CD4-positive, alpha-beta T cell (primary cell): ENCODE measurements at regions of chr11 and their contacts with region 1.

Region 1: DNA sequence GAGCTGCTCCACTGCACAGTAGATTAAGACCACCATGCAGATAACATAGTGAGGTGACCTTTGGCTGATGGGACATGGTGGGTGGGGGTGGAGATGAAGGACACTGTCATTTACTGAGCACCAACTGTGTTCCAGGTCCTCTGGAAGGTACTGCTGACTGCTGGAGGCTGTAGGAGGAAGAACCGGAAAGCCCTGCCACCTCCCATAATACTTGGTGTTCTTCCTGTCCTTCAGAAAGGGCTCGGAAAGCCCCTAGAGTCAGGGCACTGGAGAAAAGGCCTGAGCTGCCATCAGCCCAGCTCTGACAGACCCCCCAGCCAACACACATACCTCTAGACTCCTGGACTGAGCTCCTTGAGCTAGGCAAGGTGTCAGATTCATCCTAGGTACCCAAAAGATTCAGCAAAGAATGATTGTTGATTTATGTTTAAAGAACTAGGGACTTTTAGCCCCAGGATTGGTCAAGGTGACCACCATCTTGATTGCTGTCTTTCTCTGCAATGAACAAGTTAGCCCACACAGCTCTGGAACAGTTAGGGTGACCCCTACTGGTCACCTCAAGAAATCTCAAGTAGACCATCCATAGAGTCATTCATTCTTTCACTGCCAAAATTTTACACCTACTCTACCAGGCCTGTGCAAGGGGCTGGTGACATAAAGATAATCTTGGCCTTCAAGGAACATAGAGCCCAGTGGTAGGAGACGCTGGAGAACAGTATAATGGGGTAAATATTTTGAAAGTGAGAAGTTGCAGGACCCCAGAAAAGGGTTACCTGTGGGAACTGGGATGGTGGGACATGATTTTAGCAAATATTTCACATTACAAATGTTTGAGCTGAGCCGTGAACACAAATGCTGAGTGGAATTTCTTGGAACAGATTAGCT is 39.4 kb downstream of the IRAG1 start:
- DNase-seq: peak in 9 of 14 experiments; percentile 10 to 77 (median 23)
- ATAC-seq: peak; percentile 64
- H3K4me3 ChIP-seq: no peak overlapping the region
- H3K4me3 Mint-ChIP-seq: no peak overlapping the region
- H3K27ac ChIP-seq: no peak overlapping the region
- H3K27ac Mint-ChIP-seq: no peak overlapping the region
- H3K4me1 ChIP-seq: peaks cover 4% of the 10 kb centered on the region
- H3K4me1 Mint-ChIP-seq: no peaks in the 10 kb centered on the region
- H3K27me3 ChIP-seq: no peaks in the 10 kb centered on the region
- H3K27me3 Mint-ChIP-seq: no peaks in the 10 kb centered on the region
- CTCF ChIP-seq: peak; percentile 89

Region 2: GRCh38 chr11:9210922-9211320 is 1443.2 kb before region 1 on chr11:
- CTCF ChIA-PET with region 1: no interaction called
- POLR2A ChIA-PET with region 1: no interaction called
- intact Hi-C with region 1: no loop called
- DNase-seq: peak in 2 of 14 experiments; percentile 28 to 33
- ATAC-seq: no peak
- H3K4me3 ChIP-seq: no peak overlapping the region
- H3K4me3 Mint-ChIP-seq: no peak overlapping the region
- H3K27ac ChIP-seq: no peak overlapping the region
- H3K27ac Mint-ChIP-seq: no peak overlapping the region
- H3K4me1 ChIP-seq: peaks cover 13% of the 10 kb centered on the region
- H3K4me1 Mint-ChIP-seq: peaks cover 74% of the 10 kb centered on the region
- H3K27me3 ChIP-seq: no peaks in the 10 kb centered on the region
- H3K27me3 Mint-ChIP-seq: no peaks in the 10 kb centered on the region
- CTCF ChIP-seq: no peak

Region 3: GRCh38 chr11:10405855-10406592 is 248.1 kb before region 1 on chr11:
- CTCF ChIA-PET with region 1: interaction called, 16 read pairs
- POLR2A ChIA-PET with region 1: interaction called, 3 read pairs
- intact Hi-C with region 1: loop called in 1 of 2 experiments (anchors 1 kb)
- DNase-seq: peak in 13 of 14 experiments; percentile 10 to 80 (median 24)
- ATAC-seq: peak; percentile 88
- H3K4me3 ChIP-seq: no peak overlapping the region
- H3K4me3 Mint-ChIP-seq: no peak overlapping the region
- H3K27ac ChIP-seq: no peak overlapping the region
- H3K27ac Mint-ChIP-seq: no peak overlapping the region
- H3K4me1 ChIP-seq: peaks cover 18% of the 10 kb centered on the region
- H3K4me1 Mint-ChIP-seq: peaks cover 34% of the 10 kb centered on the region
- H3K27me3 ChIP-seq: no peaks in the 10 kb centered on the region
- H3K27me3 Mint-ChIP-seq: no peaks in the 10 kb centered on the region
- CTCF ChIP-seq: peak; percentile 72

Region 4: DNA sequence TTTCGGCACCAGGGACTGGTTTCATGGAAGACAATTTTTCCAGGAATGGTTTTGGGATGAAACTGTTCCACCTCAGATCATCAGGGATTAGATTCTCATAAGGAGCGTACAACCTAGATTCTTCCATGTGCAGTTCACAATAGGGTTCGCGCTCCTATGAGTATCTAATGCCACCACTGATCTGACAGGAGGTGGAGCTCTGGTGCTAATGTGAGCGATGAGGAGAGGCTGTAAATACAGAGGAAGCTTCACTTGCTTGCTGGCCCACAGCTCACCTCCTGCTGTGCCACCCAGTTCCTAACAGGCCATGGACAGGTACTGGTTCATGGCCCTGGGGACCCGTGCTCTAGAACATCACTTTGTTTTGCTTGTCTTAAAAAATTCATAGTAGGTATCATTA is 240.9 kb before region 1 on chr11:
- CTCF ChIA-PET with region 1: interaction called, 10 read pairs
- POLR2A ChIA-PET with region 1: interaction called, 4 read pairs
- intact Hi-C with region 1: loop called (anchors 1 kb)
- DNase-seq: peak; percentile 20 to 78 (median 44)
- ATAC-seq: peak; percentile 92
- H3K4me3 ChIP-seq: no peak overlapping the region
- H3K4me3 Mint-ChIP-seq: no peak overlapping the region
- H3K27ac ChIP-seq: no peak overlapping the region
- H3K27ac Mint-ChIP-seq: no peak overlapping the region
- H3K4me1 ChIP-seq: peaks cover 32% of the 10 kb centered on the region
- H3K4me1 Mint-ChIP-seq: peaks cover 50% of the 10 kb centered on the region
- H3K27me3 ChIP-seq: no peaks in the 10 kb centered on the region
- H3K27me3 Mint-ChIP-seq: no peaks in the 10 kb centered on the region
- CTCF ChIP-seq: peak; percentile 61

Region 5: DNA sequence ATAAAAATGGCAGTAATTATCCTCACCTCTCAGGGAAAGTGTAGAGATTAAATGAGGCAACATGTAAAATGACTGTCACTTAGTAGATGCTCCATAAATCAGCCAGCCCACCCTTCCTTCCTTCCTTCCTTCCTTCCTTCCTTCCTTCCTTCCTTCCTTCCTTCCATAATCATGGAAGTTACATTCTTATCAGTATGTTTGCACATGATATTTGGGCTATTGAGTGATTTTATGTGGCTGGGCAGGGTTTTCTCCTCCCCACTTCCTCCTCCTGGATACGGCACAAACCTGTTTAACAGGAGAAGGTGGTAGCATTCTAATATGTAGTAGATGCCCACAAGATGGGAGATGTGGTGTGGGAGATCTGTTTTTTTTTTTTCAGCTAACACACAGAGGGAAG is 97.6 kb before region 1 on chr11:
- CTCF ChIA-PET with region 1: interaction called, 3 read pairs
- POLR2A ChIA-PET with region 1: no interaction called
- intact Hi-C with region 1: loop called in 1 of 2 experiments (anchors 5 kb)
- DNase-seq: no peak
- ATAC-seq: no peak
- H3K4me3 ChIP-seq: no peak overlapping the region
- H3K4me3 Mint-ChIP-seq: no peak overlapping the region
- H3K27ac ChIP-seq: no peak overlapping the region
- H3K27ac Mint-ChIP-seq: no peak overlapping the region
- H3K4me1 ChIP-seq: no peaks in the 10 kb centered on the region
- H3K4me1 Mint-ChIP-seq: no peaks in the 10 kb centered on the region
- H3K27me3 ChIP-seq: peaks cover 0 to 6% of the 10 kb centered on the region in 2 experiments
- H3K27me3 Mint-ChIP-seq: peaks cover 13% of the 10 kb centered on the region
- CTCF ChIP-seq: no peak

Region 6: DNA sequence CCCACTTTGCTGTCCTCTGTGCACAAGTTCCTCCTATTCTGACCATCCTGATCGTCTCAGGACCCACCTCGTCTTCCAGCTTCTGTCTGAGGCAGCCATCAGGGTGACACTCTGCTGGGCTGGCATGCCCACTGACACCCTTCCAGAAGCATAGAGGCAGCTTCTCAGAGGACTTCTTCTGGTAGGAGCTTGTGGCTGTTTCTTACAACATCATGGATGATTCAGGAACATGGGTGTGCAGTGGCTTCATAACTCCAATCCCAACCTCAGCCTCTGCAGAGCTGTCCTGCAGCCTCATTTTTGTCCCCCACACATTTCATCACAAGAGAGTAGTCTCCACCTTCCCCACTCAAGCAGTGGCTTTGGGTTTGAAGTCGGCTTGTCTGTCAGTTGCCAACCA is 76.0 kb after region 1 on chr11:
- CTCF ChIA-PET with region 1: no interaction called
- POLR2A ChIA-PET with region 1: no interaction called
- intact Hi-C with region 1: loop called in 1 of 2 experiments (anchors 5 kb)
- DNase-seq: peak in 2 of 14 experiments; percentile 27 to 37
- ATAC-seq: no peak
- H3K4me3 ChIP-seq: no peak overlapping the region
- H3K4me3 Mint-ChIP-seq: no peak overlapping the region
- H3K27ac ChIP-seq: no peak overlapping the region
- H3K27ac Mint-ChIP-seq: no peak overlapping the region
- H3K4me1 ChIP-seq: peaks cover 12% of the 10 kb centered on the region
- H3K4me1 Mint-ChIP-seq: peaks cover 12% of the 10 kb centered on the region
- H3K27me3 ChIP-seq: no peaks in the 10 kb centered on the region
- H3K27me3 Mint-ChIP-seq: peaks cover 12% of the 10 kb centered on the region
- CTCF ChIP-seq: no peak

Region 7: DNA sequence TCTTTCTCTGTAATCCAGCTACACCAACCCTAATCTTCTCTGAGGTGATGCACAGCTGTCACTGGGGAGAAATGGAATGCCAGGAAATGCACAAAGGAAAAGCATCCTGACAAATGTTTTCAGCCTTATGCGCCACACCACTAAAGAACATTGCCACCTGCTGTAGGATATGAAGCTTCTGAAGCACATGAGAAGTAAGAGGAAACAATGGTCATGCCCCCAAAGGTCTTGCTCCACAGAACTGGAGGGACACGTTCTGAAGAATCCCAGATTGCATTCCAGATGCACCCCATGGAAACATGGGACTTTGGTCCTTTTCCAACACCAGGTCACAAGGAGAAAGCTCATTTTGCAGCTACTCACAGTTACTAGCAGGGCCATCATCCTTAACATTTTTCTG is 252.3 kb after region 1 on chr11:
- CTCF ChIA-PET with region 1: no interaction called
- POLR2A ChIA-PET with region 1: no interaction called
- intact Hi-C with region 1: no loop called
- DNase-seq: no peak
- ATAC-seq: no peak
- H3K4me3 ChIP-seq: no peak overlapping the region
- H3K4me3 Mint-ChIP-seq: no peak overlapping the region
- H3K27ac ChIP-seq: no peak overlapping the region
- H3K27ac Mint-ChIP-seq: no peak overlapping the region
- H3K4me1 ChIP-seq: no peaks in the 10 kb centered on the region
- H3K4me1 Mint-ChIP-seq: no peaks in the 10 kb centered on the region
- H3K27me3 ChIP-seq: no peaks in the 10 kb centered on the region
- H3K27me3 Mint-ChIP-seq: peaks cover 5% of the 10 kb centered on the region
- CTCF ChIP-seq: no peak